PC-3 (cell line): ENCODE measurements at regions of chr11 and their contacts with region 1.

Region 1: GRCh38 chr11:75351791-75352587 is 528 bp upstream of the ARRB1 start:
- DNase-seq: peak; percentile 48
- ATAC-seq: peak; percentile 49
- H3K4me3 ChIP-seq: peak overlapping the region; percentile 81
- H3K27ac ChIP-seq: no peak overlapping the region
- H3K4me1 ChIP-seq: peaks cover 19% of the 10 kb centered on the region
- H3K27me3 ChIP-seq: no peaks in the 10 kb centered on the region
- CTCF ChIP-seq: no peak

Region 2: GRCh38 chr11:75233742-75234172 is 118.2 kb before region 1 on chr11:
- CTCF ChIA-PET with region 1: no interaction called
- POLR2A ChIA-PET with region 1: no interaction called
- intact Hi-C with region 1: no loop called
- DNase-seq: peak; percentile 77
- ATAC-seq: no peak
- H3K4me3 ChIP-seq: no peak overlapping the region
- H3K27ac ChIP-seq: no peak overlapping the region
- H3K4me1 ChIP-seq: no peaks in the 10 kb centered on the region
- H3K27me3 ChIP-seq: peaks cover 23% of the 10 kb centered on the region; the same call in 1 of the 2 replicates
- CTCF ChIP-seq: no peak

Region 3: GRCh38 chr11:75319035-75319877 is 32.7 kb before region 1 on chr11:
- CTCF ChIA-PET with region 1: no interaction called
- POLR2A ChIA-PET with region 1: no interaction called
- intact Hi-C with region 1: no loop called
- DNase-seq: peak; percentile 53
- ATAC-seq: peak; percentile 84
- H3K4me3 ChIP-seq: no peak overlapping the region
- H3K27ac ChIP-seq: no peak overlapping the region
- H3K4me1 ChIP-seq: 0 out of 2 replicates have a peak, but pooled peaks cover 9% of the 10 kb centered on the region
- H3K27me3 ChIP-seq: no peaks in the 10 kb centered on the region
- CTCF ChIP-seq: no peak

Region 4: GRCh38 chr11:75371941-75372789 is 20.2 kb after region 1 on chr11:
- CTCF ChIA-PET with region 1: no interaction called
- POLR2A ChIA-PET with region 1: no interaction called
- intact Hi-C with region 1: loop called (anchors 2 kb)
- DNase-seq: peak; percentile 97
- ATAC-seq: peak; percentile 95
- H3K4me3 ChIP-seq: peak overlapping the region; percentile 34; the same call in 1 of the 2 replicates
- H3K27ac ChIP-seq: peak overlapping the region; percentile 77
- H3K4me1 ChIP-seq: peaks cover 25% of the 10 kb centered on the region
- H3K27me3 ChIP-seq: no peaks in the 10 kb centered on the region
- CTCF ChIP-seq: no peak